ENCODE measurements at regions of chr6 and their contacts with region 1.

Region 1: DNA sequence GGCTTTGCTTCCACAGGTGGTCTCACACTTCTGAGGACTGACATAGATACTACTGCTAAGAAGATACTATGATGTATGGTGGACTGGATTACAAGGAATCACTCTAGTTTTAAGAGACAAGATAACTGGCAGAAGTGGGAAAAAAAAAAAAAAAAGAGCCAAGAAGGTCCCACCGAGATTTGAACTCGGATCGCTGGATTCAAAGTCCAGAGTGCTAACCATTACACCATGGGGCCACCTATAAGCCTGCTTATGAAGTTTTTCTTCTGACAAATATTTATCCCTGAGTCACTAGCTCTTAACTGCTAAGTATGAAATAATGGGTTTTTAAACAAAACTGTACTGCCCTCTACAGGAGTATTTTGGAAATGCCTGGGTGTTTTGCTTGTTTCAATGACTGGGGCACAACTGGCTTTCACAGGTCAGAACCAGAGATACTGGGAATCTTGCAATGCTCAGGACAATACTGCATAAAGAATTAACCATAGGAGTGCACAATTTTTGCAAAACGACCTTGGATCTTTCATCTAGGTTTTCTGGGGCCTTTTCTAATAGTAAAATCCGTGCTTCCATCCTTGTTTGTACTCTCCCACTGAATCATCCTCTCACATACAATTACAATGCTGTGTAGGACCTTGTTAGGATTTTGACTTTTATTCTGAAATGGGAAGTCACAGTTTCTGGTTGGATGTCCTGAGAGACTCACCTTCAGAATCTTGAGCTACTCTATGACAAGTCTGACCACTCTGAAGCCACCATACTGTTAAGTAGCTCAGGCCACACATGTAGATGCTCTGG is 116.3 kb downstream of the OR2B2 start:
- DNase-seq: peak; percentile 80
- H3K4me3 ChIP-seq: no peak overlapping the region
- H3K27me3 ChIP-seq: no peaks in the 10 kb centered on the region
- CTCF ChIP-seq: peak; percentile 75

Region 2: GRCh38 chr6:27809939-27810767 is 14.3 kb after region 1 on chr6:
- CTCF ChIA-PET with region 1: interaction called, 36 read pairs
- POLR2A ChIA-PET with region 1: no interaction called
- DNase-seq: peak; percentile 92
- H3K4me3 ChIP-seq: peak overlapping the region; percentile 75
- H3K27me3 ChIP-seq: no peaks in the 10 kb centered on the region
- CTCF ChIP-seq: peak; percentile 28

Measured in BJ (cell line).